GM10248 (cell line): ENCODE measurements at regions of chr6 and their contacts with region 1.

Region 1: GRCh38 chr6:51959744-51960383 is 127.5 kb downstream of the PKHD1 start:
- DNase-seq: peak; percentile 38
- CTCF ChIP-seq: peak; percentile 89

Region 2: GRCh38 chr6:51855310-51856082 is 104.4 kb before region 1 on chr6:
- CTCF ChIA-PET with region 1: interaction called, 69 read pairs
- POLR2A ChIA-PET with region 1: no interaction called
- DNase-seq: peak; percentile 64
- CTCF ChIP-seq: peak; percentile 61

Region 3: GRCh38 chr6:51866001-51866400 is 93.9 kb before region 1 on chr6:
- CTCF ChIA-PET with region 1: interaction called, 14 read pairs
- POLR2A ChIA-PET with region 1: no interaction called
- DNase-seq: no peak
- CTCF ChIP-seq: no peak

Region 4: GRCh38 chr6:51949468-51949867 is 10.4 kb before region 1 on chr6:
- CTCF ChIA-PET with region 1: interaction called, 26 read pairs
- POLR2A ChIA-PET with region 1: no interaction called
- DNase-seq: no peak
- CTCF ChIP-seq: no peak

Region 5: DNA sequence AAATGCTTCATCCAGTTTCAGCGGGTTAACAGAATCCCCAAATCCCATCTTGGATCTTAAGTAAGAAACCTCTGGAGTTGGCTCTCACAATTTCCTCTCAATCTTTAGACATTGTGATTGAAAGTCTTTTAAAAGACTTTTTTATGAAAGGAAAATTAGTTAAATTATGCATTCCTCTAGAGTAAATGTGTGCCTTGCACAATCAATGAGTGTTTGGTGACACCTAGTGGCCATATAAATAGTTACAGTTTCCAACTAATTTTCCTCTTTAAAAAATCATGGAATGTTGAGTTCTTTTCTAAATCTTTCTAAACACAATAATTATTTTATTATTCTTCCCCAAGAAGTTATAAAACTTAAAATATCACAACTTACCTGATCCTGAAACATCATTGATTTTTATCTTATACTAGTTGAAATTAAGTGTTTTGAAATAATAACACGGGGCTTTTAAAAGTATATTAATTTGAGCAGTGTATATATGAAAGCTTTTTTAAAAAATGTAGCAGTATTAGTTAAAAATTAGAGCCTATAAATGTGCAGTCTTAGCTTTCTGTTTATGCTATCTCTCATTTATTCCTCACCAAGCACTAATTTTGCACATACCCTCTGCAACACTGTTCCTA is 61.2 kb after region 1 on chr6:
- CTCF ChIA-PET with region 1: interaction called, 58 read pairs
- POLR2A ChIA-PET with region 1: no interaction called
- DNase-seq: no peak
- CTCF ChIP-seq: peak; percentile 59

Region 6: GRCh38 chr6:52125139-52125538 is 165.3 kb after region 1 on chr6:
- CTCF ChIA-PET with region 1: no interaction called
- POLR2A ChIA-PET with region 1: no interaction called
- DNase-seq: no peak
- CTCF ChIP-seq: no peak